Activated CD4-positive, alpha-beta memory T cell treated with anti-CD3 and anti-CD28 coated beads for 36 hours (primary cell): ENCODE measurements at regions of chr15 and their contacts with region 1.

Region 1: GRCh38 chr15:65610871-65611718 is at the start of gene INTS14:
- DNase-seq: peak; percentile 97
- H3K4me3 Mint-ChIP-seq: peak within 1 kb of the TSS; percentile 97
- H3K27ac Mint-ChIP-seq: peak within 1 kb of the TSS; percentile 97
- H3K4me1 Mint-ChIP-seq: peaks cover 27% of the 10 kb centered on the region
- H3K27me3 Mint-ChIP-seq: no peaks in the 10 kb centered on the region
- total RNA-seq, gene INTS14: 42.5 to 42.7 TPM

Region 2: DNA sequence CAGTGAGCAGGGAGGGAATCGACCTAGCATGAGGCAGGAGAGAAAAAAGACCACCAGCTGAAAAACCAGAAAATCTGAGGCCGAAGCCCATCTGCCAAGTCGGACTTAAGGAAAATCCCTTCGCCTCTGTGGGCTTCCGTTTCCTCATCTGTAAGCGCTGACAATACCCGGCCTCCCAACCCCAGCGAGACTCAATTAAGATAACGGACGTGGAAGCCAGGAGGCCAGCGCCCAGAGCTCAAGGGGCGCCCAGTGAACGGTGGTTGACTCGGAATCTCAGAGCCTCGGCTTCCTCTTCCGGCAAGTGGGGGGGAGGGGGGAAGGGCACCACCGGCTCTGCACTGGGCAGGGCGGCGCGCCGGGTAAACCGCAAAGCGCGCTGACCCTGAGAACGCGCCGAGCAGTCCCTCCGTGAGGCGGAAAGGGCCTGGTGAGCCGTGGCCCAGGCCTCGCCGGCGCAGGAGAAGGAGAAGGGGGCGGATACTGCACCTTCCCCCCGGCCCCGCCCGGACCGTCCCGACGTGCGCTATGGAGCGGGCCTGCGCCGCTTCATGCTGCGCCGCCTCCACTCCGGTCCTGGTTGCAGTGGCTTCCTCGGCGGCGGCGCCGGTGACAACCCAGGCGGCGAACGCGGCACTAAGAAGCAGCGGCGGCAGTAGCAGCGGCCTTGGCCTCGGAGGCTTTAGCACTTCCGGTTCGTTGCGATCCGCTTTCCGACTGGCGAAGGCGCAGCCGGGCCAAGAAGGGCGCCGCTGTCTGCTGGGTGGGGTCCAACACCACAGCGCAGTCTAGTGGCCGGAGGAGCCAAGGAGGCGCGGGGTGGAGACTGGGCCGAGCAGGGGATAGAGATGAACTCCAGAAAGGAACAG is 93.9 kb before region 1 on chr15 and contains the start of gene DPP8:
- CTCF ChIA-PET with region 1: interaction called, 4 read pairs
- POLR2A ChIA-PET with region 1: interaction called, 5 read pairs
- intact Hi-C with region 1: loop called (anchors 1 kb)
- DNase-seq: peak; percentile 97
- H3K4me3 Mint-ChIP-seq: peak within 1 kb of the TSS; percentile 99
- H3K27ac Mint-ChIP-seq: peak within 1 kb of the TSS; percentile 97
- H3K4me1 Mint-ChIP-seq: peaks cover 42% of the 10 kb centered on the region
- H3K27me3 Mint-ChIP-seq: no peaks in the 10 kb centered on the region
- total RNA-seq, gene DPP8: 24.9 to 27.1 TPM

Region 3: GRCh38 chr15:65530314-65531122 is 80.6 kb before region 1 on chr15 and contains the start of gene HACD3:
- CTCF ChIA-PET with region 1: interaction called, 3 read pairs
- POLR2A ChIA-PET with region 1: interaction called, 11 read pairs
- intact Hi-C with region 1: no loop called
- DNase-seq: peak; percentile 91
- H3K4me3 Mint-ChIP-seq: peak within 1 kb of the TSS; percentile 83
- H3K27ac Mint-ChIP-seq: peak within 1 kb of the TSS; percentile 77
- H3K4me1 Mint-ChIP-seq: peaks cover 29% of the 10 kb centered on the region
- H3K27me3 Mint-ChIP-seq: no peaks in the 10 kb centered on the region
- total RNA-seq, gene HACD3: 26.1 to 29.1 TPM

Region 4: GRCh38 chr15:65550681-65551098 is 60.4 kb before region 1 on chr15:
- CTCF ChIA-PET with region 1: no interaction called
- POLR2A ChIA-PET with region 1: no interaction called
- intact Hi-C with region 1: no loop called
- DNase-seq: no peak
- H3K4me3 Mint-ChIP-seq: no peak overlapping the region
- H3K27ac Mint-ChIP-seq: no peak overlapping the region
- H3K4me1 Mint-ChIP-seq: peaks cover 15% of the 10 kb centered on the region
- H3K27me3 Mint-ChIP-seq: no peaks in the 10 kb centered on the region

Region 5: DNA sequence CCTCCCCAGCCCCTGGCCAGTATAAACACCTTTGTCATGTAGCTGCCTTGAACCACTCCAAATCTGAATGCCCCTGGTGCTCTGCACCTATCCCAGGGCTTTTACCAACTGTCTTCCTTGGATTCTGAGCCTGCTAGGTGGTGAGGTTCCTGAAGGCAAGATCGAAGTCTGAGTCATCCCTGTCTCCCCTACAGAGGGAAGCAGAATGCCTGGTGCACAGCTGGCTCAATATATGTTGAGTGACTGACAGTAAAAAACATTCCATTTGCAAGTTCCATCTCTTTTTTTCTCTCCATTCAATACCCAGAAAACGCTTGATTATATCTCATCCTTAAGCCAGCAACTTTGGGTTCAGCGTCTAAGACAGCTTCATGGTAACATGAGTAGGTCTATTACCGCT is 35.4 kb after region 1 on chr15:
- CTCF ChIA-PET with region 1: no interaction called
- POLR2A ChIA-PET with region 1: no interaction called
- intact Hi-C with region 1: no loop called
- DNase-seq: no peak
- H3K4me3 Mint-ChIP-seq: no peak overlapping the region
- H3K27ac Mint-ChIP-seq: no peak overlapping the region
- H3K4me1 Mint-ChIP-seq: peaks cover 7% of the 10 kb centered on the region
- H3K27me3 Mint-ChIP-seq: no peaks in the 10 kb centered on the region

Region 6: GRCh38 chr15:66293419-66294156 is 682.5 kb after region 1 on chr15 and contains the start of gene DIS3L:
- CTCF ChIA-PET with region 1: interaction called, 3 read pairs
- POLR2A ChIA-PET with region 1: no interaction called
- intact Hi-C with region 1: loop called (anchors 10 kb)
- DNase-seq: peak; percentile 68
- H3K4me3 Mint-ChIP-seq: peak within 1 kb of the TSS; percentile 84
- H3K27ac Mint-ChIP-seq: peak within 1 kb of the TSS; percentile 89
- H3K4me1 Mint-ChIP-seq: peaks cover 39% of the 10 kb centered on the region
- H3K27me3 Mint-ChIP-seq: no peaks in the 10 kb centered on the region
- total RNA-seq, gene DIS3L: 23.5 to 26.3 TPM